Naive thymus-derived CD4-positive, alpha-beta T cell (primary cell): ENCODE measurements at regions of chr1 and their contacts with region 1.

Region 1: DNA sequence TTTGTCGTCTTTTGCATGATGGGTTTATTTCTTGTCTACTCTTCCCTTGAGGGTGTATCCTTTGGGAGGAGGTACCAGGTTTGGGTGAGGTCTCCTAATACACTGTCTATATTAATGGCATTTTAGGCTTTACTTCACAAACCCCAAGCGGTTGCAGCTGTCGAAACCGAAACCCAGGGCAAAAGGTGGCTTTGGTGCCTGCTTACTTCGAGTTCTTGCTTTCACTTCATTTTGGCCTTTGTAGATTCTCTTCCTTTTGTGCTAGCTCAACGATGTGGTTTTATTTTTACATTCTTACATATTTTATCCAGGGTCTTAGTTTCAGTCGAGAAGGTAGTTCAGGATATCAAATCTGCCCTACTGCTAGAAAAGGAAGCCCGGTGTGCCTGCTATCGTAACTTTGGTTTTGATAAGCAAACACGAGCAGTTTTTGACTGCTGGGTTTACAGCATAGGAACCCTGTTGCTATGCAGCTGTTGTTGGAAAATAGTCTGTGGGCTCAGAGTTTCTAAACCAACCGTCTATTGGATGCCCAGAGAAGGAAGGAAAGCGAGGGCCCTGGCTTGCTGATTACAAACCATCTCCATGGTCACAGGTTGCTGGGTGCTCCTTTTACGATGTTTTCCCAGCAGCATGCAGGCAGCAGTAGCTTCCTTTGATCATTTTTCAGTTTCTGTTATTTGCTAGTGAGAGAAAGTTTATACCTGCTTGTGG is 9.8 kb upstream of the TSPAN2 start:
- DNase-seq: peak; percentile 31 to 95 (median 94)
- ATAC-seq: peak; percentile 95
- H3K4me3 ChIP-seq: peak overlapping the region; percentile 58
- H3K4me3 Mint-ChIP-seq: peak overlapping the region; percentile 76 to 99 (median 90)
- H3K27ac ChIP-seq: peak overlapping the region; percentile 89
- H3K27ac Mint-ChIP-seq: peak overlapping the region; percentile 98 to 100 (median 99)
- H3K4me1 ChIP-seq: peaks cover 20 to 29% of the 10 kb centered on the region in 2 donors
- H3K4me1 Mint-ChIP-seq: peaks cover 24 to 59% (median 51%) of the 10 kb centered on the region in 7 donors
- H3K27me3 ChIP-seq: no peaks in the 10 kb centered on the region
- H3K27me3 Mint-ChIP-seq: peaks cover 0 to 27% (median 0%) of the 10 kb centered on the region in 5 donors

Region 2: GRCh38 chr1:113949007-113949406 is 1150.1 kb before region 1 on chr1:
- CTCF ChIA-PET with region 1: no interaction called
- POLR2A ChIA-PET with region 1: no interaction called
- intact Hi-C with region 1: loop called in 1 of 2 experiments (anchors 10 kb)
- DNase-seq: peak in 5 of 9 donors; percentile 16 to 53 (median 41)
- ATAC-seq: no peak
- H3K4me3 ChIP-seq: no peak overlapping the region
- H3K4me3 Mint-ChIP-seq: peak overlapping the region in 9 of 10 donors; percentile 36 to 88 (median 72)
- H3K27ac ChIP-seq: peak overlapping the region; percentile 73
- H3K27ac Mint-ChIP-seq: peak overlapping the region in 8 of 9 donors; percentile 92 to 99 (median 97)
- H3K4me1 ChIP-seq: peaks cover 42 to 68% of the 10 kb centered on the region in 2 donors
- H3K4me1 Mint-ChIP-seq: peaks cover 33 to 95% (median 85%) of the 10 kb centered on the region in 7 donors
- H3K27me3 ChIP-seq: no peaks in the 10 kb centered on the region
- H3K27me3 Mint-ChIP-seq: no peaks in the 10 kb centered on the region

Region 3: GRCh38 chr1:114581335-114582287 is 517.5 kb before region 1 on chr1 and contains the start of gene BCAS2:
- CTCF ChIA-PET with region 1: no interaction called
- POLR2A ChIA-PET with region 1: no interaction called
- intact Hi-C with region 1: loop called (anchors 1 kb)
- DNase-seq: peak; percentile 71 to 98 (median 97)
- ATAC-seq: peak; percentile 97
- H3K4me3 ChIP-seq: peak within 1 kb of the TSS; percentile 76
- H3K4me3 Mint-ChIP-seq: peak within 1 kb of the TSS; percentile 92 to 99 (median 98)
- H3K27ac ChIP-seq: peak within 1 kb of the TSS; percentile 93
- H3K27ac Mint-ChIP-seq: peak within 1 kb of the TSS; percentile 95 to 99 (median 98)
- H3K4me1 ChIP-seq: peaks cover 21 to 23% of the 10 kb centered on the region in 2 donors
- H3K4me1 Mint-ChIP-seq: peaks cover 14 to 55% (median 41%) of the 10 kb centered on the region in 7 donors
- H3K27me3 ChIP-seq: peaks cover 0 to 3% of the 10 kb centered on the region in 2 donors
- H3K27me3 Mint-ChIP-seq: peaks cover 0 to 4% (median 4%) of the 10 kb centered on the region in 5 donors
- total RNA-seq, gene BCAS2: 32.3 to 87.1 (median 46.0) TPM

Region 4: DNA sequence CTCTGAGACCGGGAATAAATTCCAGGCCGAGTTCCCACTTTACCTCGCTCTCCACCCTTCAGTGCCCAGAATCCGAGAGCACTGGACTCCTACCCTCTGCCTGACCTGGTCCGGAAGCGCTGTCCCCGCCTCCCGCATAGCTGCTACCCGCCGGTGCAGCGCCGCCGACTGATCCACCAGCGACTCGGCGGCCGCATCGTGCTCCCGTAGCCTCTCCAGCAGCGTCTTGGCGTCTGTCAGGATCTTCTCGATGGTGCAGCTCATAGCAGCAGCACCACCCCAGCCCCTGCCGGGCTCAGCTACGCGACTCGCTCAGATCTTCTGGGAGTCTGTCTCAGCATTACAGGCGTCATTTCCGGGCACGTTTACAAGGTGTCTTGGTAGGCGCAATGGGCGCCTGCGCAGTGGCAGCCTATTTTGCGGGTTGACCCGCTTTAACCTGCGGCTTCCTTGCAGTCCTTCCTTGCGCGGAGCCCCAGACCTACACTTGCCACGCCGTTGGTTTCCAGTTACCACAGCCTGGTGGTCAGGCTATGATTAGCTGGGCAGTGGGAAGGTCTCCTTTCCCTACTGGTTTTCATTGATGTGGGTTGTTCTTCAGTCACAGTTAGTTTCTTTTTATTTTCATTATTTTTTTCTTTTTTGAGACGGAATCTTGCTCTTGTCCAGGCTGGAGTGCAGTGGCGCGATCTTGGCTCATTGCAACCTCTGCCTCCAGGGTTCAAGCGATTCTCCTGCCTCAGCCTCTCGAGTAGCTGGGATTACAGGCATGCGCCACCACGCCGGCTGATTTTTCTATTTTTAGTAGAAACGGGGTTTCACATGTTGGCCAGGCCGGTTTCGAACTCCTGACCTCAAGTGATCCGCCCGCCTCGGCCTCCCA is 318.6 kb before region 1 on chr1 and contains the start of gene SIKE1:
- CTCF ChIA-PET with region 1: no interaction called
- POLR2A ChIA-PET with region 1: no interaction called
- intact Hi-C with region 1: loop called (anchors 1 kb)
- DNase-seq: peak; percentile 82 to 98 (median 95)
- ATAC-seq: peak; percentile 99
- H3K4me3 ChIP-seq: peak within 1 kb of the TSS; percentile 78
- H3K4me3 Mint-ChIP-seq: peak within 1 kb of the TSS; percentile 98 to 100 (median 100)
- H3K27ac ChIP-seq: peak within 1 kb of the TSS; percentile 87
- H3K27ac Mint-ChIP-seq: peak within 1 kb of the TSS; percentile 96 to 100 (median 99)
- H3K4me1 ChIP-seq: peaks cover 0 to 8% of the 10 kb centered on the region in 2 donors
- H3K4me1 Mint-ChIP-seq: peaks cover 19 to 40% (median 30%) of the 10 kb centered on the region in 7 donors
- H3K27me3 ChIP-seq: no peaks in the 10 kb centered on the region
- H3K27me3 Mint-ChIP-seq: peaks cover 0 to 17% (median 0%) of the 10 kb centered on the region in 5 donors
- total RNA-seq, gene SIKE1: 43.4 to 69.4 (median 61.2) TPM

Region 5: DNA sequence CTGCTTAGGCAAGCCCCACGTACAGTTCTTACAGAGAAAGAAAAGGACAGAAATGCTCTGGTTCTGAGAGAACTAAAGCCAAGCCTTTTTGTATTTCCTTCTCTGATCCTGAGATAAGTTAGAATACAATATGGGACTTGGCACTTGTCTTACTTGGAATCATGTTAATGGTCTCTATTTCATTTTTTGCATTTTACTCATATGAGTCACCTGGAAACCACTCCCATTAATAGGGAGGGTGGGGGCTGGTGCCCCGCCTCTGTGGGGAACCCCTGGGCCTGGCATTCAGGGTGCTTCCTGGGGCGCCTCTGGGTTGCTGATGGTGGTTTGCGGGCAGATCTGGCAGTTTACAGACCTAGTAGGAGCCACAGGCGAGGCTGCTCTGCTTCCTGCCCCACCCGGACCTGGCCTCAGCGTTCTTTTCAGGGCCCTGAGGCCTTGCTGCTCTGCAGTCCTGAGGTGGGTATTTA is 36.6 kb before region 1 on chr1:
- CTCF ChIA-PET with region 1: no interaction called
- POLR2A ChIA-PET with region 1: interaction called, 10 read pairs
- intact Hi-C with region 1: loop called (anchors 1 kb)
- DNase-seq: peak; percentile 70 to 97 (median 97)
- ATAC-seq: peak; percentile 97
- H3K4me3 ChIP-seq: peak overlapping the region; percentile 36
- H3K4me3 Mint-ChIP-seq: peak overlapping the region; percentile 60 to 87 (median 78)
- H3K27ac ChIP-seq: peak overlapping the region; percentile 84
- H3K27ac Mint-ChIP-seq: peak overlapping the region; percentile 89 to 100 (median 99)
- H3K4me1 ChIP-seq: peaks cover 32% of the 10 kb centered on the region in 2 donors
- H3K4me1 Mint-ChIP-seq: peaks cover 36 to 59% (median 46%) of the 10 kb centered on the region in 7 donors
- H3K27me3 ChIP-seq: no peaks in the 10 kb centered on the region
- H3K27me3 Mint-ChIP-seq: peaks cover 0 to 6% (median 0%) of the 10 kb centered on the region in 5 donors

Region 6: GRCh38 chr1:115179397-115179835 is 80.3 kb after region 1 on chr1:
- CTCF ChIA-PET with region 1: no interaction called
- POLR2A ChIA-PET with region 1: no interaction called
- intact Hi-C with region 1: no loop called
- DNase-seq: no peak
- ATAC-seq: no peak
- H3K4me3 ChIP-seq: no peak overlapping the region
- H3K4me3 Mint-ChIP-seq: no peak overlapping the region
- H3K27ac ChIP-seq: no peak overlapping the region
- H3K27ac Mint-ChIP-seq: no peak overlapping the region
- H3K4me1 ChIP-seq: no peaks in the 10 kb centered on the region
- H3K4me1 Mint-ChIP-seq: peaks cover 0 to 1% (median 0%) of the 10 kb centered on the region in 7 donors
- H3K27me3 ChIP-seq: no peaks in the 10 kb centered on the region
- H3K27me3 Mint-ChIP-seq: peaks cover 0 to 16% (median 5%) of the 10 kb centered on the region in 5 donors